SK-N-SH (cell line): ENCODE measurements at regions of chr1 and their contacts with region 1.

Region 1: GRCh38 chr1:206912445-206913095 is 9.2 kb downstream of the FCMR start:
- DNase-seq: peak; percentile 81
- H3K4me3 ChIP-seq: no peak overlapping the region; a peak in 1 of 4 replicates
- H3K27ac ChIP-seq: no peak overlapping the region
- H3K4me1 ChIP-seq: peaks cover 0 to 10% of the 10 kb centered on the region in 2 experiments; a peak in 1 of 4 replicates
- H3K27me3 ChIP-seq: peaks cover 43% of the 10 kb centered on the region
- CTCF ChIP-seq: peak; percentile 81
- EP300 ChIP-seq: no peak
- RAD21 ChIP-seq: peak; percentile 92

Region 2: DNA sequence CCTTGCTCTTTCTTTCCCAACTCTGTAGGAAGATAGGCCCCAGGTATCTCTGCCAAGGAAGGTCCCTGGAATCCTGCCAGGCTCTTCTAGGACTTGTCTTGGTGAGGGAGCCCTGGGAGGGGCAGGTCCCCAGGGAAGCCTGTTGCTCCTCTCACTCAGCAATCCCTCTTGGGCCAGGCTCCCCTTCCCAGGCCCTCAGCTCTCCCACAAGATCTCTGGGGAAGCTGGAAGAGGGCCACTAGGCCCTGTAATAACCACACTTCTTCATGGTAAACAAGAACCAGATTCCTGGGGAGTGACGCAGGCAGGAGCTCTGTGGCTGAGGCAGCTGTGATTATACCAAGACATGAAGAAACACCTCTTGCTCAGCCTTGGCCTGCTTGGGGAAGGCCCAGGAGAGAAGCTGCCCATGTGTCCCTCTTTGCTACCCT is 237.8 kb before region 1 on chr1:
- CTCF ChIA-PET with region 1: interaction called, 11 read pairs
- POLR2A ChIA-PET with region 1: no interaction called
- DNase-seq: no peak
- H3K4me3 ChIP-seq: no peak overlapping the region
- H3K27ac ChIP-seq: peak overlapping the region in 1 of 2 experiments; percentile 67; a peak in 2 of 4 replicates
- H3K4me1 ChIP-seq: peaks cover 0 to 9% of the 10 kb centered on the region in 2 experiments; a peak in 3 of 4 replicates
- H3K27me3 ChIP-seq: no peaks in the 10 kb centered on the region
- CTCF ChIP-seq: no peak
- EP300 ChIP-seq: no peak
- RAD21 ChIP-seq: no peak

Region 3: GRCh38 chr1:206734499-206735142 is 177.9 kb before region 1 on chr1:
- CTCF ChIA-PET with region 1: interaction called, 380 read pairs
- POLR2A ChIA-PET with region 1: no interaction called
- DNase-seq: peak; percentile 83
- H3K4me3 ChIP-seq: no peak overlapping the region; a peak in 1 of 4 replicates
- H3K27ac ChIP-seq: no peak overlapping the region
- H3K4me1 ChIP-seq: peaks cover 0 to 2% of the 10 kb centered on the region in 2 experiments; a peak in 1 of 4 replicates
- H3K27me3 ChIP-seq: no peaks in the 10 kb centered on the region
- CTCF ChIP-seq: peak; percentile 72
- EP300 ChIP-seq: no peak
- RAD21 ChIP-seq: peak; percentile 85

Region 4: DNA sequence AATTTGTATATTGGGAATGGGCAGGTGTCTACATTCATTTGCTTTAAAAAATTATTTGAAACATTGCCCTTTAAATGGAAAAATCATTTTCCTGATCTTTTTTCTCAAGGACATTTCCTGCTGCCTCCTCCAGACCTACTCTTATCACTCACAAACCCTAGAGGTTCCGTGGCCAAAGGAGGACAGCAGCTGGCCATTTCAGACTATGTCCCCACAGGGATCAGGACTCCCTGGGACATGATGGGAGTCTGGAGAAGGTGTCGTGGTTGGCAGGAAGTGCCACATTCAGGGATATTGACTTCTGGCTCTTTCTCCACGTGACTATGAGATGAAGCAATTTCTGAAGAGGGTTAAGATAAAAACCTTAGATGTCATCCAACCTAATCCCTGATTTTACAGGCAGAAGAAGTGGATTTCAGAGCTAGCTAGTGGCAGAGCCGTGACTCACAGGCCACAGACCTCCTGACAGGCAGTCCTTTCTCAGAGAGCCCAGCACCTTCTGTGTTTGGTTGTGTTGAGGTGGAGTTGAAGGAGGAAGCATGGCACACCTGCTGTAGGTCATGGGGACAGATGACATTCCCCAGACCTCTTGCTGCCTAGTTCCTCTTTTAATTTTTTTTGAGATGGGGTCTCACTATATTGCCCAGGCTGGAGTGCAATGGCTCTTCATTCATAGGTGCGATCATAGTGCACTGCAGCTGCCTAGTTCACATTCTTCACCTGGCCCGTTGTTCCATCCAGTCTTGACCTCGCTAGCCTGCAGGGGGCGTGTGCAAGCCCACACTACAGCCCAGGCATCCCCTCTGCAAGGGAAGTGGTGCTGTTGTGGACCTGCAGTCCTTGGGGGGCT is 114.8 kb before region 1 on chr1:
- CTCF ChIA-PET with region 1: interaction called, 13 read pairs
- POLR2A ChIA-PET with region 1: no interaction called
- DNase-seq: peak; percentile 27
- H3K4me3 ChIP-seq: no peak overlapping the region
- H3K27ac ChIP-seq: no peak overlapping the region
- H3K4me1 ChIP-seq: no peaks in the 10 kb centered on the region
- H3K27me3 ChIP-seq: 0 out of 2 replicates have a peak, but pooled peaks cover 8% of the 10 kb centered on the region
- CTCF ChIP-seq: peak; percentile 59
- EP300 ChIP-seq: no peak
- RAD21 ChIP-seq: peak; percentile 40; the same call in 1 of the 2 replicates

Region 5: DNA sequence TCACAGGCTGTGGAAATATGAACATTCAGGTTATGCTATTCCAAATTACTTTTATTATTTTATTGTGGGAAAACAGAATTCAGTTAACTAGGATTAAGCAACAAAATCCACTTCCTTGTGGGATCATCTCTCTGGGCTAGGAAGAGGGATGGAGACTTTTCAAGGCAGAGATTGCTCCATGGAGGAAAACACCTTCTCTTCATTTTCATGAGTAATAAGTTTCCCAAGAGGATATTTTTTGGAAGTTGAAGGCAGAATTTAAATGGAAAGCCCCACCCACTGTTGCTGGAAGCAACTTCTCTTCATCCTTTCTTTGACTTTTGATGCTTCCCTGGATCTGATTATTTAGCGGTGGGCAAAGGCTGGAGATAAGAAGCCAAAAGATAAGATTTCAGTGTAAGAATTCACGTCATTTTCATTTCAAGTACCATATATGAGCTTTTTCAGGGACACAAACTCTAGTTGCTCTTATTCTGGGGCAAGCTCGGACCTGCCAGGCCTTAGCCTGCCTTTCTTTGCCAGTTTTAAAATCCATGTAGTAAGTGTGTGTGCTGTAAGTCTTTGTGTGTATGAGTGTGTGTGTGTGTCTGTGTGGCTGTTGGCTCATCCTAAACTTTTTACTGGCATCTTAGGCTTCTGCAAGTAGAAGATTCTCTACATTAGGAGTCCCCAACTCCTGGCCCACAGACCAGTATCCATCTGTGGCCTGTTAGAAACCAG is 27.1 kb before region 1 on chr1:
- CTCF ChIA-PET with region 1: interaction called, 13 read pairs
- POLR2A ChIA-PET with region 1: no interaction called
- DNase-seq: no peak
- H3K4me3 ChIP-seq: no peak overlapping the region
- H3K27ac ChIP-seq: no peak overlapping the region
- H3K4me1 ChIP-seq: no peaks in the 10 kb centered on the region
- H3K27me3 ChIP-seq: peaks cover 5% of the 10 kb centered on the region; the same call in 1 of the 2 replicates
- CTCF ChIP-seq: no peak
- EP300 ChIP-seq: no peak
- RAD21 ChIP-seq: no peak

Region 6: GRCh38 chr1:206971029-206971655 is 58.6 kb after region 1 on chr1:
- CTCF ChIA-PET with region 1: interaction called, 11 read pairs
- POLR2A ChIA-PET with region 1: no interaction called
- DNase-seq: no peak
- H3K4me3 ChIP-seq: no peak overlapping the region
- H3K27ac ChIP-seq: no peak overlapping the region
- H3K4me1 ChIP-seq: no peaks in the 10 kb centered on the region
- H3K27me3 ChIP-seq: peaks cover 58% of the 10 kb centered on the region; the same call in 1 of the 2 replicates
- CTCF ChIP-seq: no peak
- EP300 ChIP-seq: no peak
- RAD21 ChIP-seq: no peak

Region 7: DNA sequence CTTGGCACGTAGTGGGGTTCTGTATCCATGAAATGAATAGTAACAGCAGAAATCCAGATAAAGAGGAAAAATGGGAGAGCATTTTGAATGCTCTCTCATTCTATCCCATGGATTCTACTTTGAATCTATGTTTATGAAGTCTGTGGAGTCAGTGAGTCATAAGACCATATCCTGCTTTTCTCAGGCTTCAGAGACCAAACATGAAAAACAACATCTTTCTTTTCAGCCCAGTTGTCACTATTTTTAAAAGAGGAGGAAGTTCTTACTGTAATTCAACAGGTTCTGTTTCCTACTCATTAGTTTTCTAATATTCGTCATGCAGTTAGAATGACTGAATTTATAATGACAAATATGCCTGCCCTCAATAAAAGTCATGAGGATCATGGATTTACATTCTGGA is 369.5 kb after region 1 on chr1:
- CTCF ChIA-PET with region 1: no interaction called
- POLR2A ChIA-PET with region 1: no interaction called
- DNase-seq: no peak
- H3K4me3 ChIP-seq: no peak overlapping the region
- H3K27ac ChIP-seq: peak overlapping the region in 1 of 2 experiments; percentile 31; a peak in 1 of 4 replicates
- H3K4me1 ChIP-seq: no peaks in the 10 kb centered on the region; a peak in 1 of 4 replicates
- H3K27me3 ChIP-seq: no peaks in the 10 kb centered on the region
- CTCF ChIP-seq: no peak
- EP300 ChIP-seq: no peak
- RAD21 ChIP-seq: no peak